ENCODE measurements at regions of chr9 and their contacts with region 1.

Region 1: DNA sequence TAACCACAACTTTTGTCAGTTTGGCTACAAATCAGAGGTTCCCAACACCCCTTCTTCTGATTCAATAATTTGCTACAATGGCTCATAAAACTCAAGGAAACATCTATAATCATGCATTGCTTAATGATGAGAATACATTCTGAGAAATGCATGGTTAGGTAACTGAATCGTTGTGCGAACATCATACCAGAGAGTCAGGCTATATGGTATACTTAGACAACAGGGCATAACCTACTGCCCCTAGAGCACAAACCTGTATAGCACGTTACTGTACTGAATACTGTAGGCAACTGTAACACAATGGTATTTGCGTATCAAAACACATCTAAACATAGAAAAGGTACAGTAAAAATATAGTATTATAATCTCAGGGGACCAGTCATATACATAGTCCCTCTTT is 31.0 kb upstream of the RNF38 start:
- DNase-seq: no peak
- H3K4me3 ChIP-seq: no peak overlapping the region
- H3K27ac ChIP-seq: no peak overlapping the region
- H3K4me1 ChIP-seq: no peaks in the 10 kb centered on the region
- CTCF ChIP-seq: peak; percentile 38; the same call in 1 of the 2 replicates

Region 2: GRCh38 chr9:36415822-36416515 is 15.1 kb before region 1 on chr9:
- CTCF ChIA-PET with region 1: no interaction called
- POLR2A ChIA-PET with region 1: interaction called, 4 read pairs
- intact Hi-C with region 1: loop called (anchors 1 kb)
- DNase-seq: peak; percentile 8
- H3K4me3 ChIP-seq: no peak overlapping the region
- H3K27ac ChIP-seq: no peak overlapping the region
- H3K4me1 ChIP-seq: no peaks in the 10 kb centered on the region
- CTCF ChIP-seq: peak; percentile 52